Head of caudate nucleus (tissue), 42 donors: ENCODE measurements at regions of chr4 and their contacts with region 1.

Region 1: GRCh38 chr4:109559983-109560686 is at the start of gene MCUB:
- DNase-seq: peak; percentile 30 to 92 (median 79)

Region 2: GRCh38 chr4:109390115-109390768 is 169.9 kb before region 1 on chr4:
- intact Hi-C with region 1: no loop called
- DNase-seq: no peak

Region 3: DNA sequence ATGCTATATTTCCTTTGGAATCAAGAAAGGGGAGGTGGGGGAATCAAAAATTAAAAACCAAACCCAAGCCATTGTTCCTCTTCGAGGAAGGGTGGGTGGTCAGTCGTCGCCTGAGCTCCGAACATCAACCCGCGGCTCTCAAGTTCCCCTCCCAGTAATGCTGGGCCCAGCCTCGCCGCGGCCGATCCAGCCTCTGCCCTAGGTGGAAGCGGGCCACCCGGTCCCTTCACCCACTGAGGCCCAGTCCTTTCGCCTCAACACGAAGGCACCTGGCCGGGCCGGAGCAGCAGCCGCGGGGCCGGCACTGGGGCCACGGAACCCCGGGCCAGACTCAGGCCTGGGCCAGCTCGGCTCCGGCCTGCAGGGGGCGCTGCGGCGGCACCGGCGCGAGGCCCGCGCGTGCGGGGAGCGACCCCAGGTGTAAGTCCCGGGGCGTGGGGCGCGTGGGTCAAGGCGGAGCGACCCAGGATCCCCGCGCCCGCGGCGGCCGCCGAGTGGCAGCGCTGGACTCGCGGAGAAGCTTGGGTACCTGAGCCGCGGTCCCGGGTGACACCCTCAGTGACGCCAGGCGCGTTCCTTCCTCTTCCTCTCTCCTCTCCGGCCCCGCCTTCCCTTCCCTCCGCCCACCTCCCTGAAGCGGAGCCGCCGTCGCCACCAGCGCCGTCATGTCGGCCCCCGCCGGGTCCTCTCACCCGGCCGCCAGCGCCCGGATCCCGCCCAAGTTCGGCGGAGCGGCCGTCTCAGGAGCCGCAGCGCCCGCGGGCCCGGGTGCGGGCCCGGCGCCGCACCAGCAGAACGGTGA is 126.7 kb before region 1 on chr4 and contains the start of gene SEC24B:
- intact Hi-C with region 1: loop called (anchors 10 kb)
- DNase-seq: peak; percentile 65 to 96 (median 87)

Region 4: GRCh38 chr4:110055158-110055768 is 495.1 kb after region 1 on chr4:
- intact Hi-C with region 1: no loop called
- DNase-seq: peak in 14 of 42 donors; percentile 5 to 61 (median 30)